Common myeloid progenitor, CD34-positive (primary cell): ENCODE measurements at regions of chr12 and their contacts with region 1.

Region 1: GRCh38 chr12:6039894-6040568 is 84.4 kb downstream of the VWF start:
- DNase-seq: peak; percentile 51 to 76 (median 72)
- H3K4me3 ChIP-seq: peak overlapping the region in 1 of 7 experiments; percentile 20
- H3K27ac ChIP-seq: no peak overlapping the region
- H3K4me1 ChIP-seq: peaks cover 0 to 7% (median 0%) of the 10 kb centered on the region in 4 experiments
- H3K27me3 ChIP-seq: no peaks in the 10 kb centered on the region

Region 2: GRCh38 chr12:5965950-5966383 is 74.1 kb before region 1 on chr12:
- CTCF ChIA-PET with region 1: interaction called, 20 read pairs
- POLR2A ChIA-PET with region 1: no interaction called
- DNase-seq: peak; percentile 38 to 61 (median 60)
- H3K4me3 ChIP-seq: no peak overlapping the region
- H3K27ac ChIP-seq: no peak overlapping the region
- H3K4me1 ChIP-seq: peaks cover 0 to 6% (median 0%) of the 10 kb centered on the region in 4 experiments
- H3K27me3 ChIP-seq: no peaks in the 10 kb centered on the region

Region 3: GRCh38 chr12:5982106-5982505 is 57.9 kb before region 1 on chr12:
- CTCF ChIA-PET with region 1: interaction called, 18 read pairs
- POLR2A ChIA-PET with region 1: no interaction called
- DNase-seq: no peak
- H3K4me3 ChIP-seq: no peak overlapping the region
- H3K27ac ChIP-seq: no peak overlapping the region
- H3K4me1 ChIP-seq: no peaks in the 10 kb centered on the region
- H3K27me3 ChIP-seq: no peaks in the 10 kb centered on the region

Region 4: GRCh38 chr12:6018265-6018664 is 21.8 kb before region 1 on chr12:
- CTCF ChIA-PET with region 1: interaction called, 15 read pairs
- POLR2A ChIA-PET with region 1: interaction called, 8 read pairs
- DNase-seq: no peak
- H3K4me3 ChIP-seq: no peak overlapping the region
- H3K27ac ChIP-seq: no peak overlapping the region
- H3K4me1 ChIP-seq: peaks cover 0 to 11% (median 5%) of the 10 kb centered on the region in 4 experiments
- H3K27me3 ChIP-seq: no peaks in the 10 kb centered on the region

Region 5: GRCh38 chr12:6026998-6027397 is 13.0 kb before region 1 on chr12:
- CTCF ChIA-PET with region 1: interaction called, 11 read pairs
- POLR2A ChIA-PET with region 1: no interaction called
- DNase-seq: no peak
- H3K4me3 ChIP-seq: no peak overlapping the region
- H3K27ac ChIP-seq: no peak overlapping the region
- H3K4me1 ChIP-seq: peaks cover 0 to 12% (median under 1%) of the 10 kb centered on the region in 4 experiments
- H3K27me3 ChIP-seq: no peaks in the 10 kb centered on the region

Region 6: DNA sequence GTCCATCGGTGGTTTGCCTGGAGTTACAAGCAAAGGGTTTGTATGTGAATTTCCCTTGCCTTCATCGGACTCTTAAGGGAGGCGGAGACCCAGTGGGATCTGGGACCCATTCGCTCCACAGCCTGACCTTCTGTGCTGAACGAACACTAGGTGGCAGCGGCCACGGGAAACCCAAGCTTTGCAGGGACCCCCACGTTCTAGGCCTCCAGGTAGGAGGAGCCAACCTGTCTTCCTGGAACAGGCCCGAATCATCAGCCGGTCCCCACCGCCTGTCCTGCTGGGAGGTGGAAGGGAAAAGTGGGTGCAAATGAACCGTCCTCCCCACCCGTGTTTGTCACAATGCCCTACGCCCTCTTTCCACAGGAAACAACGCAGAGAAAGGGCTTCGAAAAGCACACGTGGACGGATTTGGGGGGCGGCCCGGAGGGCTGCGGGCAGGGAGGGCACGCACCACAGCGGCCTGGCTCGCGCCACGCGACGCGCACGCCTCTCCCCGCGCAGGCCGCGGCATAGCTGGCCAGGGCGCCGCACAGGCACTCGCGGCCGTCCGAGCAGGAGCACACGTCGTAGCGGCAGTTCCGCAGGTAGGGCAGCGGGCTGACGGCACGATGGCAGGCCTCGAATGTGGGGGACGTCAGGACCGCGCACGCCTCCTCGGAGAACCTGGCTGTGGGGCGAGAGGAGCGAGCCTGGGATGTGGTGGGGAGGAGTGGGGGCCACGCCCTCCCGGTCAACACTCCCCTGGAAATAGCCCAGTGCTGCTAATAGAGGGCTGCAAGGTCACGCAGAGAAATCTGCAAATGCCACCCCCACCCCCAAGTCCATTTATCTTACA is 16.6 kb after region 1 on chr12:
- CTCF ChIA-PET with region 1: interaction called, 19 read pairs
- POLR2A ChIA-PET with region 1: no interaction called
- DNase-seq: peak; percentile 73 to 81 (median 79)
- H3K4me3 ChIP-seq: peak overlapping the region in 4 of 7 experiments; percentile 0 to 68 (median 36)
- H3K27ac ChIP-seq: no peak overlapping the region
- H3K4me1 ChIP-seq: peaks cover 0 to 21% (median 9%) of the 10 kb centered on the region in 4 experiments
- H3K27me3 ChIP-seq: no peaks in the 10 kb centered on the region

Region 7: DNA sequence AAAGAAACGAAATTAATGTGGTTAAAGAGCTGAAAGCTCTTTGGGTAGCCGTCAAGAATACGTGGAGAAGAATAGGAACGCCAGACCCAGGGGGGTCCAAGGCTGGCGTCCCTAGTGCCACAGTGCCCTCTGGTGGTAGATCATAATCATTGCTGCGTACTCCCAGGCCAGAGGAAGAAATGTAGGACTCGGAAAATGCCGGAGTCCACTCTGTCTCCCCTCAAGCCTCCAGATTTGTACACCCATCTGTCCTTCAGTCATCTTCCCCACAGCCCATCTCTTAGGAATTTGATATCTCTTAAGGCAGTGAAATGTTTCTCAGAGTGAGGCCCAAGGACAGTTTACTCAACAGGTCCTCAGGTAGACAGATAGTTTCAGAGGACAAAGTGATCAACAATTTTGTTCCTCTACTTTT is 245.0 kb after region 1 on chr12:
- CTCF ChIA-PET with region 1: interaction called, 10 read pairs
- POLR2A ChIA-PET with region 1: no interaction called
- DNase-seq: peak; percentile 66 to 76 (median 68)
- H3K4me3 ChIP-seq: no peak overlapping the region
- H3K27ac ChIP-seq: no peak overlapping the region
- H3K4me1 ChIP-seq: peaks cover 0 to 10% (median 0%) of the 10 kb centered on the region in 4 experiments
- H3K27me3 ChIP-seq: no peaks in the 10 kb centered on the region